Activated CD4-positive, alpha-beta memory T cell treated with anti-CD3 and anti-CD28 coated beads, Interleukin-2, amount 10 ng/mL, durations not matched to agents 7 days and 5 days (primary cell): ENCODE measurements at regions of chrX and their contacts with region 1.

Region 1: GRCh38 chrX:49884290-49884862 is 5.1 kb downstream of the USP27X start:
- DNase-seq: peak; percentile 59
- H3K4me3 Mint-ChIP-seq: no peak overlapping the region
- H3K27ac Mint-ChIP-seq: no peak overlapping the region
- H3K4me1 Mint-ChIP-seq: peaks cover 9% of the 10 kb centered on the region
- H3K27me3 Mint-ChIP-seq: no peaks in the 10 kb centered on the region

Region 2: DNA sequence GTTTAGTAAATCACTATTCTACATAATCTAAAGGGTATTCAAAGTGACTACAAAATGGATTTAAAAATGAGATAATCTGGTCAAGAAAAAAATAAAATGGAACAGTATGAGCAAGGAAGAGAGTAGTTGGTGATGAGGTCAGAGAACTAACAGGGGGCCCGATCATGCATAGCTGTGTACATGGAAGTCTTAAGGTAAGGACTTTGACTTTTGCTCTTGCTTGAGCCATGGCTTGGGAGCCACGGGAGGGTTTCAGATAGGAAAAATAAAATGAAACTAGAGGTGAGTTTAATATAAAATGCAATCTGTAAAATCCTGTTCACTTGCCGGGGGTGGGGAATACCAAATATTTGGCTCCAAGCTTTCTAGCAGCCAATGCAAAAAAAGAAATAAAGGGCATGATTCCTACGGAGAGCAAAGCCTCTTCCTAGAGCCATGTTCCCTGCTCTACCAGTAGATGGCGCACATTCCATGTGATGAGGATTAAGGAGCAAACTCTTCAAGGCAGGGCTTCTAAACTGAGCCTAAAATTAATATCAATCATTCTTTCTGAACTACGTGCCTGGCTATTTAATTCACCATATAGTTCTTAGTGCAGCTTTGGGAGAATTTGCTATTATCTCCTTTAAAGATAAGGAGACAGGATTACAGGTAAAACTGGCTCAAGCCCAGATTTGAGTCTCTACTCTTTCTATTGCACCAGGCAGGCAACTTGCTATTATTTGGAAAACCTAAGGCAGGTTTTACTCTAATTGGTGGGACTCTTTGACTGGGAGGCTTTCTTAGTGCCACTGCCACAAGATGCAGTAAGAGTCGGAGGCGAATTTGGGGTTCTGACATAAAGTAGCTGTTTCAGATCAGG is 31.2 kb after region 1 on chrX:
- CTCF ChIA-PET with region 1: interaction called, 39 read pairs
- POLR2A ChIA-PET with region 1: no interaction called
- DNase-seq: peak; percentile 38
- H3K4me3 Mint-ChIP-seq: no peak overlapping the region
- H3K27ac Mint-ChIP-seq: no peak overlapping the region
- H3K4me1 Mint-ChIP-seq: peaks cover 2% of the 10 kb centered on the region
- H3K27me3 Mint-ChIP-seq: peaks cover 1% of the 10 kb centered on the region

Region 3: DNA sequence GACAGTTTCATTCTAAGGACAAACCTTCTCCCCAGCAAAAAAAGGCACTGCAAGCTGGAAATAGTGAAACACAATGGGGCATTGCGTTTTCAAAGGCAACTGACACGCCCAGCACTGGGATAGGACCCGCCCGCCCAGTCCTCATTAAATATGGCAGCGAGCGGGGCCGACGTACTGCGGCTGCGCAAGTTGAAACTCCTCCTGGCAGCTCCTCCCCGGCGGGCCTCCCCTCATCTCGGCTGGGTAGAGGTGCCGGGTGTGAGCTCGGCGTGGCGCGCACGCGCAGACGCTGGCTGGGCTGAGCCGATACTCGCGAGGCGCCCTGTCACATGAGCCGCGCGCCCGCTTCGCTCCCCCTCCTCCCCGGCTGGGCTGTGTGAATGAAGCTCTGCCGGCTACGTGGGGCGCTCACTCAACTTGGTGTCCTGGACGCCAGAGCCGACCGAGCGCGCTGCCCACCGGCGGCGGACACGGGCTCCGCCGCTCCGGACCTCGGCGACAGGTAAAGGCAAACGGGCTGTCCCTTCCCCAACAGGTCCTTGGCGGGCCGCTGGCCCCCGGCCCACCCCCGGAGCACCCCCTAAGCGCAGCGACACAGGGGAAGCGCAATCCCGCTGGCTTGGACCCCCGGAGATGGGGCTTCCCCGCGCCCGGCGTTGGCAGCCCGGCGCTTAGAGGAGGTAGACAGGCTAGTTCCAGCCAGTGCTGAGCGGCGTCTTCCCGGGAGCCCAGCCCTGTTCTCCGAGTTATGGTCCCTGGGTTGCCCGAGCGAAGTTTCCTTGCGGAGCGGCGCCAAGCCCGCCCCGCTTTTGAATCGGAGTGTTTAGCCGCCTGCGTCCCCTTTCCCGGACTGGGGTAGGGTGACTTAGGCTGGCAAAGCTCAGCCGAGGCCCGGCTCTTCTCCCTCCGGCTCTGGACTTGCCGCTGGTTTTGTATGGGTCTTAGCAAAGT is 38.2 kb after region 1 on chrX and contains the start of gene CLCN5:
- CTCF ChIA-PET with region 1: interaction called, 39 read pairs
- POLR2A ChIA-PET with region 1: interaction called, 3 read pairs
- DNase-seq: peak; percentile 94
- H3K4me3 Mint-ChIP-seq: peak within 1 kb of the TSS; percentile 72
- H3K27ac Mint-ChIP-seq: peak within 1 kb of the TSS; percentile 52
- H3K4me1 Mint-ChIP-seq: peaks cover 18% of the 10 kb centered on the region
- H3K27me3 Mint-ChIP-seq: peaks cover 1% of the 10 kb centered on the region
- total RNA-seq, gene CLCN5: 3.0 TPM